GM12878 (cell line): ENCODE measurements at regions of chr16 and their contacts with region 1.

Region 1: GRCh38 chr16:85610508-85611332 is 2.4 kb upstream of the GSE1 start:
- DNase-seq: no peak
- ATAC-seq: peak; percentile 70
- H3K4me3 ChIP-seq: peak overlapping the region; percentile 70; the same call in 1 of the 2 replicates
- H3K27ac ChIP-seq: no peak overlapping the region
- H3K4me1 ChIP-seq: peaks cover 35% of the 10 kb centered on the region
- H3K27me3 ChIP-seq: no peaks in the 10 kb centered on the region
- CTCF ChIP-seq: peak; percentile 96 to 99 (median 97)
- EP300 ChIP-seq: no peak
- POLR2A ChIP-seq: no peak
- RAD21 ChIP-seq: peak; percentile 93

Region 2: DNA sequence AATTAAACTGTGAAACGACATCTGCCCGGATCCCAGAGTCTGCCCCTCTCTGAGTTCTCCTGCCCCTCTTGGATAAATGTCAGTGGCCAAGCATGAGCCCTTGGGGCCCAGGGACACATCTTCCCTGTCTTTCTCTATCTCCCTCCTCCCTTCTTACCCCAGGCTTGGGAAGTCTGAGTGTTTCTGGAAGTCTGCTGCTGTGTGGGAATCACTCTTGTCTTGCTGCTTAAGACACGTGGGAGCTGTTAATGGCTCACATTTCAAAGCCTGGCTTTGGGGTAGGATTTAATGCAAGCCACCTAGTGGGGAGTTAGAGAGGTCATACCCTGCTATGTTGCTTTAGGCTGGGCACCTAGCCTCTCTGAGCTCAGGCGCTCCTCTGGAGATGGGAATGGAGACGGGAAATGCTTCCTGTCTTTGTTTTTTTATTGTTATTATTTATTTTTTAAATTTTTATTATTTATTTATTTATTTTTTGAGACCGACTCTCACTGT is 280.0 kb before region 1 on chr16:
- CTCF ChIA-PET with region 1: no interaction called
- POLR2A ChIA-PET with region 1: no interaction called
- RAD21 ChIA-PET with region 1: no interaction called
- SMC1A ChIA-PET with region 1: no interaction called
- in situ Hi-C with region 1: no loop called
- intact Hi-C with region 1: no loop called
- DNase-seq: no peak
- ATAC-seq: peak; percentile 87
- H3K4me3 ChIP-seq: no peak overlapping the region
- H3K27ac ChIP-seq: no peak overlapping the region
- H3K4me1 ChIP-seq: no peaks in the 10 kb centered on the region
- H3K27me3 ChIP-seq: peaks cover 0 to 15% of the 10 kb centered on the region in 2 experiments; a peak in 3 of 4 replicates
- CTCF ChIP-seq: peak; percentile 37 to 48 (median 38)
- EP300 ChIP-seq: no peak
- POLR2A ChIP-seq: no peak
- RAD21 ChIP-seq: peak; percentile 48

Region 3: GRCh38 chr16:85420501-85421337 is 190.0 kb before region 1 on chr16:
- CTCF ChIA-PET with region 1: interaction called, 26 read pairs
- POLR2A ChIA-PET with region 1: no interaction called
- RAD21 ChIA-PET with region 1: interaction called, 6 read pairs
- SMC1A ChIA-PET with region 1: interaction called, 10 read pairs
- in situ Hi-C with region 1: loop called (anchors 25 kb)
- intact Hi-C with region 1: loop called (anchors 2 kb)
- DNase-seq: no peak
- ATAC-seq: peak; percentile 89
- H3K4me3 ChIP-seq: no peak overlapping the region
- H3K27ac ChIP-seq: no peak overlapping the region
- H3K4me1 ChIP-seq: no peaks in the 10 kb centered on the region
- H3K27me3 ChIP-seq: no peaks in the 10 kb centered on the region; a peak in 1 of 4 replicates
- CTCF ChIP-seq: peak; percentile 96 to 100 (median 98)
- EP300 ChIP-seq: no peak
- POLR2A ChIP-seq: no peak
- RAD21 ChIP-seq: peak; percentile 46; the same call in 1 of the 2 replicates

Region 4: GRCh38 chr16:85441189-85441889 is 169.4 kb before region 1 on chr16:
- CTCF ChIA-PET with region 1: interaction called, 21 read pairs
- POLR2A ChIA-PET with region 1: no interaction called
- RAD21 ChIA-PET with region 1: interaction called, 4 read pairs
- SMC1A ChIA-PET with region 1: interaction called, 7 read pairs
- in situ Hi-C with region 1: loop called (anchors 25 kb)
- intact Hi-C with region 1: loop called (anchors 1 kb)
- DNase-seq: no peak
- ATAC-seq: peak; percentile 70
- H3K4me3 ChIP-seq: no peak overlapping the region
- H3K27ac ChIP-seq: no peak overlapping the region
- H3K4me1 ChIP-seq: no peaks in the 10 kb centered on the region
- H3K27me3 ChIP-seq: no peaks in the 10 kb centered on the region; a peak in 2 of 4 replicates
- CTCF ChIP-seq: peak; percentile 22 to 55 (median 23); a peak in 4 of 6 replicates
- EP300 ChIP-seq: no peak
- POLR2A ChIP-seq: no peak
- RAD21 ChIP-seq: peak; percentile 48

Region 5: GRCh38 chr16:85528528-85529387 is 82.0 kb before region 1 on chr16:
- CTCF ChIA-PET with region 1: interaction called, 29 read pairs
- POLR2A ChIA-PET with region 1: no interaction called
- RAD21 ChIA-PET with region 1: interaction called, 5 read pairs
- SMC1A ChIA-PET with region 1: interaction called, 4 read pairs
- in situ Hi-C with region 1: no loop called
- intact Hi-C with region 1: no loop called
- DNase-seq: no peak
- ATAC-seq: peak; percentile 84
- H3K4me3 ChIP-seq: no peak overlapping the region
- H3K27ac ChIP-seq: no peak overlapping the region
- H3K4me1 ChIP-seq: no peaks in the 10 kb centered on the region
- H3K27me3 ChIP-seq: no peaks in the 10 kb centered on the region; a peak in 1 of 4 replicates
- CTCF ChIP-seq: peak; percentile 46 to 77 (median 60)
- EP300 ChIP-seq: no peak
- POLR2A ChIP-seq: no peak
- RAD21 ChIP-seq: peak; percentile 43